Activated CD4-positive, alpha-beta T cell treated with anti-CD3 and anti-CD28 coated beads, Interleukin-2, amount 10 ng/mL, durations not matched to agents 24 days and 14 days (primary cell): ENCODE measurements at regions of chr3 and their contacts with region 1.

Region 1: GRCh38 chr3:129249276-129250065 is at the start of gene COPG1:
- DNase-seq: peak; percentile 98
- H3K4me3 Mint-ChIP-seq: peak within 1 kb of the TSS; percentile 96
- H3K27ac Mint-ChIP-seq: peak within 1 kb of the TSS; percentile 99
- H3K4me1 Mint-ChIP-seq: peaks cover 41% of the 10 kb centered on the region
- H3K27me3 Mint-ChIP-seq: no peaks in the 10 kb centered on the region
- total RNA-seq, gene COPG1: 142 and 164 TPM in 2 replicates

Region 2: GRCh38 chr3:128969993-128970739 is 279.3 kb before region 1 on chr3:
- intact Hi-C with region 1: loop called (anchors 5 kb)
- DNase-seq: peak; percentile 90
- H3K4me3 Mint-ChIP-seq: no peak overlapping the region
- H3K27ac Mint-ChIP-seq: no peak overlapping the region
- H3K4me1 Mint-ChIP-seq: peaks cover 6% of the 10 kb centered on the region
- H3K27me3 Mint-ChIP-seq: peaks cover 5% of the 10 kb centered on the region

Region 3: GRCh38 chr3:129052675-129053074 is 196.8 kb before region 1 on chr3:
- intact Hi-C with region 1: loop called (anchors 1 kb)
- DNase-seq: no peak
- H3K4me3 Mint-ChIP-seq: no peak overlapping the region
- H3K27ac Mint-ChIP-seq: no peak overlapping the region
- H3K4me1 Mint-ChIP-seq: peaks cover 9% of the 10 kb centered on the region
- H3K27me3 Mint-ChIP-seq: peaks cover 14% of the 10 kb centered on the region

Region 4: DNA sequence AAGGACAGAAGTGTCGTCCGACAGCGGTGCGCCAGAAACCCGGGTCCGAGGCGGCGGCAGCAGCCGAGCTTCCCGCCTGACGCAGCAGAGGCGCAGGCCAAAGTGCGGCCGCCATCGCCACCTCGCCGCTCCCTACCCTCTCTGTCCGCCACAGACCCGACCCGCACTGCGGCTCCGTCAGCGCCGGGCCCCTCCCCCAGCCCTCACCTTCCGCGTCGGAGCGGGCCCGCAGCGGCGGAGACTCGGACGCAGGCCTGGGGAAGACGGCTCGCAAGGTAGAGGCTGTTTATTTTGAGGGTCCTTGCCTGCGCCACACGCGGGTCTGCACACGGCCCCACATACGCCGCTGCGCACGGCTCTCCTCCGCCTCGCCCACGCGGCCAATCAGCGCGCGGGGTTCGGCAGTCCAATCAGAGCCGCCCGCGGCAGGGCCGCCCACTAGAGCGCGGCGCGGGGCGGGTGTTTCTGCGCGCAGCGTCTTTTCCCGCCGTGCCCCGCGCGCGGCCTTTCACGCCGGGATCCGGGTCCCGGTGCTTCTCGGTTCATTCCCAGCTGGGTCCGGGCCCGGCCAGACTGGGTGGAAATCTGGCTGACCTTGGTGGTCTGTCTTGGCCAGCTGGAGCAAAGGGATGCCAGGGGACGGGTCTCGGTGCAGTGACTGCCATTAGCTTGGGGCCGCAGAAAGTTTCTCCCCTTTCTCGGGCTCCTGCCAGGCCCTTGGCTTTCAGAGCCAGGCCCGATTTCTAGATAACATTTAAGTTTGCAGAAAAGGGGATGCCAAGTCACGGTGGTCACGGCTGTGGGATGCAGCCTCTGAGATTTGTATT is 65.7 kb before region 1 on chr3 and contains the start of gene CNBP:
- intact Hi-C with region 1: loop called (anchors 1 kb)
- DNase-seq: peak; percentile 98
- H3K4me3 Mint-ChIP-seq: peak within 1 kb of the TSS; percentile 96
- H3K27ac Mint-ChIP-seq: peak within 1 kb of the TSS; percentile 99
- H3K4me1 Mint-ChIP-seq: peaks cover 33% of the 10 kb centered on the region
- H3K27me3 Mint-ChIP-seq: no peaks in the 10 kb centered on the region
- total RNA-seq, gene CNBP: 422 and 430 TPM in 2 replicates

Region 5: DNA sequence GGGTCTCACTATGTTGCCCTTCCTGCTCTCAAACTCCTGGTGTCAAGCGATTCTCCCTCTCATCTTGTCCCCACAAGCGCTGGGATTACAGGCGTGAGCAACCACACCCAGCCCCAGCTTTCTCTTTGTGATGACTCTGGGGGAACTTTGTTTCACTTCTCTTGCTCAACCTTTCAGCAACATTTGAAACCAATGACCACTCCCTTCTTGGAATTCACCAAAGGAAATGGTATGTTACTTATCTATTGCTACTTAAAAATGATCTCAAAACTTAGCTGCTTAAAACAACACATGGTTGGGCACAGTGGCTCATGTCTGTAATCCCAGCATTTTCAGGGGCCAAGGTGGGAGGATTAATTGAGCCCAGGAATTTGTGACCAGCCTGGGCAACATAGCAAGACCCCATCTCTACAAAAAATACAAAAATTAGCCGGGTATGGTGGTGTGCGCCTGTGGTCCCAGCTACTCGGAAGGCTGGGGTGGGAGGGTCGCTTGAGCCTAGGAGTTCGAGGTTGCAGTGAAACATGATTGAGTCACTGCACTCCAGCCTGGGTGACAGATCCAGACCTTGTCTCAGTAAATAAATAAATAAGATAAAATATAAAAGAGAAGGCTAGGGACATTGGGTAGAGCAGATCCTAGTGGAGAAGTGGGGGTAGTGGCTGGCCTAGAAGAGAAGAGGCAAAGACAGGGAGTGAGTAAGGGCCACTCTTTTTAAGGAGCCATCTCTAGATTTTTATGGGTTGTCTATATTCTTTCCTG is 10.3 kb before region 1 on chr3:
- intact Hi-C with region 1: loop called (anchors 1 kb)
- DNase-seq: peak; percentile 89
- H3K4me3 Mint-ChIP-seq: peak overlapping the region; percentile 71
- H3K27ac Mint-ChIP-seq: peak overlapping the region; percentile 92
- H3K4me1 Mint-ChIP-seq: peaks cover 38% of the 10 kb centered on the region
- H3K27me3 Mint-ChIP-seq: no peaks in the 10 kb centered on the region